ENCODE measurements at regions of chr7 and their contacts with region 1.

Region 1: DNA sequence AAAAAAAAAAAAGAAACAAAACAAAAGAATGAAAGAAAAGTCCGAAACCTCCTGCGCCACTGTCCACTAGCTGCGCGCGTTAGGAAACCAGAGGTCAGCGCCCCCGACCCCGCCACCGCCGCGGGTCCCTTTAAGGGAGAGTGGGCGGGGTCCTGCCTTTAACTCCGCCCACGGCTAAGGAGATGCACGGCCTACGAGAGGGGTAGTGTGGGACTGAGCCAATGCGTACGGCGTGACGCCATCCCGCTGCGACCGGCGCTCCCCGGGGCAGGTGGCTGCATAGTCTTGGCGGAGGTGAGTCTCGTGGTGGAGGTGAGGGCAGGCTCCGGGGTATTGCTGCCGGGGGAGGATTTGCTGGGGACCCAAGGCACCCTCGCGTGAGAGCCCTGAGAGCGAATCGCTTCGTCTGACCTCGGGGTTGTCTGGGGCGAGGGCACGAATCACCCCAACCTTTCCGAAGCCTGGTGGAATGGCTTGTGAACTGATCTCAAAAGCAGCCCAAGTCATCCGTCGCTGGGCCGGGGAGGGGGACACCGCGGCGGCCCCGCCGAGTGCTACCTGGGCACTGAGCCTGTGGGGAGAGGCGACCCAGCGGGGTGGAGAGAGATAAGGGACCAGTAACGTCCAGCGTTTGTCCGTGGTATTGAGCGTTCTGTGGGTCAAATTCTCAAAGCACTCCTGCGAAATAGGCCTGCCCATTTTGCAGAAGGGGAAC is at the start of gene MRPS17:
- DNase-seq: peak; percentile 95 to 99
- H3K4me3 ChIP-seq: peak within 1 kb of the TSS; percentile 71
- H3K27ac ChIP-seq: peak within 1 kb of the TSS; percentile 52
- H3K4me1 ChIP-seq: peaks cover 7% of the 10 kb centered on the region
- H3K27me3 ChIP-seq: peaks cover 22% of the 10 kb centered on the region
- CTCF ChIP-seq: no peak
- total RNA-seq, gene MRPS17: 38.2 and 39.6 TPM in 2 replicates

Region 2: DNA sequence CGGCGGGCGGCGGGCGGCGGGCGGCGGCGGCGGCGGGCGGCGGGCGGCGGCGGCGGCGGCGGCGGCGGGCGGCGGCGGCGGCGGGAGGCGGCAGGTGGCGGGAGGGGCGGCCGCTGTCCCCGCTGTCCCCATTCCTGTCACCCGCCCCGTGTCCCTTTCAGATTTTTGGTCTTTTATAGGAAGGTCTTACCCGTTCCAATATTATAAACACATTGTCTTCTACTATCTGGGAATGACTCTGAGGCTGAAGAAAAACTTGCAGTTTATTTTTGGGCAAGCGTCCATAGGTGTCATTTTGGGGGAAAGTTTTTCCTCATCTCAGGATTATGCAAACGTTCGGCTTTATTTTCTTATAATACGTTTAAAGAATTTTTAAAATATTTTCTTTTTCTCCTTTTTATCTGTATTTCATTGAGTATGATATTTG is 64.0 kb before region 1 on chr7:
- CTCF ChIA-PET with region 1: no interaction called
- POLR2A ChIA-PET with region 1: no interaction called
- intact Hi-C with region 1: loop called (anchors 1 kb)
- DNase-seq: peak in 1 of 2 experiments; percentile 29
- H3K4me3 ChIP-seq: peak overlapping the region; percentile 79
- H3K27ac ChIP-seq: peak overlapping the region; percentile 47; the same call in 1 of the 2 replicates
- H3K4me1 ChIP-seq: peaks cover 11% of the 10 kb centered on the region
- H3K27me3 ChIP-seq: no peaks in the 10 kb centered on the region
- CTCF ChIP-seq: 0 out of 2 replicates have a peak, but pooled peaks have one; percentile 15

Region 3: DNA sequence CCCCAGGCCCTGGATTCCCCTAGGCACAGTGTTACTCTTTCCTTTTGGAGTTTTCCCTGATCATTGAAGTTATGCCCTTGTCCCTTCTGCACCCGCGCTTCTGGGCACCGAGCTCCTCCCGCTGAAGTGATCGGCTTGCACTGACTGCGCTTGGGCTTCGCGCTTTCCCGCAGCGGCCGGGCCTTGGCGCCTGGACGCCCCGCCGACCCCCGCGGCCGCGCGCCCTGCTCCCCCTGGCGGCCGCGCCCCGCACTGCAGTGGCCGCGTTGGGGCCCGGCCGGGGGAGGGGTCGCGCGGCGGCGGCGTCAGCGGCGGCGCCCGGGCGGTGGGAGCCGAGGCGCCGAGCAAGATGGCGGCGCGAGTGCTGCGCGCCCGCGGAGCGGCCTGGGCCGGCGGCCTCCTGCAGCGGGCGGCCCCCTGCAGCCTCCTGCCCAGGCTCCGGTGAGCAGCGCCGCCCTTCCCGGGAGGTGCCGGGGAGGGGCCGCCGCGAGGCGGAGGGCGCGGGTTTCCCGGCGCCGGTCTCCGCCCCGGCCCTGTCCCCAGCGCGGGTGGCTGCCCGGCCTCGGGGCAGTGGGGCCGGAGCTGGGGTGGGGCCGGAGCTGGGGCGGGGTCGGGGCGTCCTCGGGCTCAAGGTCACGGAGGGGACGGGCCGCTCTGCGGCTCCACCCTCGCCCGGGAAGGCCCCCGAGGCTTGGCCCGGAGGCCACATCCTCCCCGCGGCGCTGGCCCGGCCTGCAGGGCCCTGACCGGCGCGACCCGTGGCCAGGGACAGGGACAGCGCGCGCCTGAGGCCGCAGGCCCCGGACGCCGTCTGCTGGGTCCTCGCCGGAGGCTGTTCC is 12.7 kb after region 1 on chr7 and contains the start of gene NIPSNAP2:
- CTCF ChIA-PET with region 1: no interaction called
- POLR2A ChIA-PET with region 1: interaction called, 3 read pairs
- intact Hi-C with region 1: loop called (anchors 1 kb)
- DNase-seq: peak; percentile 63 to 89
- H3K4me3 ChIP-seq: peak within 1 kb of the TSS; percentile 67
- H3K27ac ChIP-seq: peak within 1 kb of the TSS; percentile 54
- H3K4me1 ChIP-seq: peaks cover 19% of the 10 kb centered on the region
- H3K27me3 ChIP-seq: no peaks in the 10 kb centered on the region
- CTCF ChIP-seq: peak; percentile 64
- total RNA-seq, gene NIPSNAP2: 96.1 and 97.5 TPM in 2 replicates